H1 (cell line): ENCODE measurements at regions of chr20 and their contacts with region 1.

Region 1: GRCh38 chr20:24934101-24934661 is 14.9 kb upstream of the CST7 start:
- DNase-seq: no peak
- H3K4me3 ChIP-seq: no peak overlapping the region
- H3K27ac ChIP-seq: no peak overlapping the region
- H3K4me1 ChIP-seq: peaks cover 0 to 3% (median 1%) of the 10 kb centered on the region in 4 experiments; a peak in 3 of 7 replicates
- H3K27me3 ChIP-seq: no peaks in the 10 kb centered on the region
- CTCF ChIP-seq: no peak
- EP300 ChIP-seq: no peak
- POLR2A ChIP-seq: no peak
- RAD21 ChIP-seq: no peak

Region 2: GRCh38 chr20:24790746-24791283 is 143.4 kb before region 1 on chr20:
- CTCF ChIA-PET with region 1: interaction called, 12 read pairs
- POLR2A ChIA-PET with region 1: no interaction called
- DNase-seq: no peak
- H3K4me3 ChIP-seq: no peak overlapping the region
- H3K27ac ChIP-seq: no peak overlapping the region
- H3K4me1 ChIP-seq: peaks cover 0 to 9% (median 5%) of the 10 kb centered on the region in 4 experiments; a peak in 3 of 7 replicates
- H3K27me3 ChIP-seq: no peaks in the 10 kb centered on the region
- CTCF ChIP-seq: peak in 2 of 3 experiments; percentile 18 to 35; a peak in 2 of 4 replicates
- EP300 ChIP-seq: no peak
- POLR2A ChIP-seq: no peak
- RAD21 ChIP-seq: peak; percentile 21 to 49; a peak in 3 of 4 replicates

Region 3: GRCh38 chr20:24899153-24899552 is 35.0 kb before region 1 on chr20:
- CTCF ChIA-PET with region 1: no interaction called
- POLR2A ChIA-PET with region 1: no interaction called
- DNase-seq: no peak
- H3K4me3 ChIP-seq: no peak overlapping the region
- H3K27ac ChIP-seq: no peak overlapping the region
- H3K4me1 ChIP-seq: no peaks in the 10 kb centered on the region
- H3K27me3 ChIP-seq: no peaks in the 10 kb centered on the region; a peak in 1 of 7 replicates
- CTCF ChIP-seq: no peak
- EP300 ChIP-seq: no peak
- POLR2A ChIP-seq: no peak
- RAD21 ChIP-seq: no peak

Region 4: GRCh38 chr20:24917797-24918578 is 16.2 kb before region 1 on chr20:
- CTCF ChIA-PET with region 1: interaction called, 48 read pairs
- POLR2A ChIA-PET with region 1: no interaction called
- DNase-seq: peak; percentile 67 to 88
- H3K4me3 ChIP-seq: no peak overlapping the region
- H3K27ac ChIP-seq: no peak overlapping the region
- H3K4me1 ChIP-seq: no peaks in the 10 kb centered on the region
- H3K27me3 ChIP-seq: no peaks in the 10 kb centered on the region; a peak in 1 of 7 replicates
- CTCF ChIP-seq: peak; percentile 84 to 91 (median 89)
- EP300 ChIP-seq: no peak
- POLR2A ChIP-seq: no peak
- RAD21 ChIP-seq: peak; percentile 96 to 97

Region 5: DNA sequence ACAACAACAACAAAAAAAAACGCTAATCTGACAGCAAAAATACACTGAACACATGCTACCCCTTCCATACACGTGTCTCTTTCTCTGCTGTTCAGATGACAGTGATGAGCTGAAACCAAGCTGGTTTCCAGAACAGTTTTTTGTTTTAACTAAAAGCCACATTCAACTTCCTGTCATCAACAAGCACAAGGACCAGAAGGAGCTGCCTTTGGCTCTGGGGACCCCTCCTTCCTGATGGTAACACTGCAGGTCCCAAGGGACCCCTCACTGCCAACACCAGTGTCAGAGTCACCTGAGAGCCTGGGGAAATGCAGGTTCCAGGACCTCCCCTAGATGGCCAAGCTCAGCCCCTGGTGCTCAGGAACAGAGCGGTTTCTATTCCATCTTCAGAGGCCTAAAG is 20.9 kb after region 1 on chr20:
- CTCF ChIA-PET with region 1: interaction called, 16 read pairs
- POLR2A ChIA-PET with region 1: no interaction called
- DNase-seq: peak in 1 of 2 experiments; percentile 32
- H3K4me3 ChIP-seq: no peak overlapping the region
- H3K27ac ChIP-seq: no peak overlapping the region
- H3K4me1 ChIP-seq: peaks cover 0 to 2% (median 0%) of the 10 kb centered on the region in 4 experiments; a peak in 1 of 7 replicates
- H3K27me3 ChIP-seq: no peaks in the 10 kb centered on the region
- CTCF ChIP-seq: no peak
- EP300 ChIP-seq: no peak
- POLR2A ChIP-seq: no peak
- RAD21 ChIP-seq: no peak

Region 6: DNA sequence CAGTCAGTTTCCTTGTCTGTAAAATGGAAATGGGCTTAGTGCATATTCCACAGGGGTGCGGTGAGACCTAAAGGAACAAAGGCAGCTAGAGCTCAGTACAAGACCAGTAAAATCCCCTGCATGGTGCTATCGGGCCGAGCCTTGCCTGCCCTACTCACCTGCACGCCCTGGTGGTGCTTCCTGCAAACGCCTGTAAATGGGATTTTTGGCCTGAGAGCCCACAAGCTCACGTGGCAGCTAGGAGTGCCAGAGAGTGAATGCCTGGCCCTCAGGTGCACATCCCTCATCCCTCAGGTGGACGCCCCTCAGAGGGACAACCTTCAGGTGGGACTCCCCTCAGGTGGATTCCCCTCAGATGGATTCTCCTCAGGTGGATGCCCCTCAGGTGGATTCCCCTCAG is 195.7 kb after region 1 on chr20:
- CTCF ChIA-PET with region 1: no interaction called
- POLR2A ChIA-PET with region 1: no interaction called
- DNase-seq: no peak
- H3K4me3 ChIP-seq: no peak overlapping the region
- H3K27ac ChIP-seq: no peak overlapping the region
- H3K4me1 ChIP-seq: no peaks in the 10 kb centered on the region
- H3K27me3 ChIP-seq: no peaks in the 10 kb centered on the region
- CTCF ChIP-seq: peak; percentile 25 to 47 (median 29)
- EP300 ChIP-seq: no peak
- POLR2A ChIP-seq: no peak
- RAD21 ChIP-seq: peak in 1 of 2 experiments; percentile 36; a peak in 1 of 4 replicates